IMR-90 (cell line): ENCODE measurements at regions of chr17 and their contacts with region 1.

Region 1: GRCh38 chr17:76868176-76868668 is at the start of gene MGAT5B:
- DNase-seq: peak; percentile 76
- ATAC-seq: peak; percentile 91
- H3K4me3 ChIP-seq: peak within 1 kb of the TSS; percentile 41
- H3K27ac ChIP-seq: no peak within 1 kb of the TSS; the same call in 1 of the 2 replicates
- H3K4me1 ChIP-seq: peaks cover 26% of the 10 kb centered on the region
- H3K27me3 ChIP-seq: peaks cover 16% of the 10 kb centered on the region
- CTCF ChIP-seq: peak; percentile 94
- POLR2A ChIP-seq: peak; percentile 50; the same call in 1 of the 2 replicates
- RAD21 ChIP-seq: peak; percentile 97
- total RNA-seq, gene MGAT5B: 0.54 and 0.56 TPM in 2 replicates

Region 2: GRCh38 chr17:77054936-77055335 is 186.7 kb after region 1 on chr17:
- CTCF ChIA-PET with region 1: interaction called, 32 read pairs
- POLR2A ChIA-PET with region 1: no interaction called
- dilution Hi-C with region 1: no loop called
- in situ Hi-C with region 1: loop called (anchors 5 kb)
- intact Hi-C with region 1: loop called (anchors 1 kb)
- DNase-seq: no peak
- ATAC-seq: peak; percentile 21; the same call in 1 of the 2 replicates
- H3K4me3 ChIP-seq: no peak overlapping the region
- H3K27ac ChIP-seq: no peak overlapping the region
- H3K4me1 ChIP-seq: no peaks in the 10 kb centered on the region
- H3K27me3 ChIP-seq: peaks cover 54% of the 10 kb centered on the region
- CTCF ChIP-seq: no peak
- POLR2A ChIP-seq: no peak
- RAD21 ChIP-seq: no peak

Region 3: DNA sequence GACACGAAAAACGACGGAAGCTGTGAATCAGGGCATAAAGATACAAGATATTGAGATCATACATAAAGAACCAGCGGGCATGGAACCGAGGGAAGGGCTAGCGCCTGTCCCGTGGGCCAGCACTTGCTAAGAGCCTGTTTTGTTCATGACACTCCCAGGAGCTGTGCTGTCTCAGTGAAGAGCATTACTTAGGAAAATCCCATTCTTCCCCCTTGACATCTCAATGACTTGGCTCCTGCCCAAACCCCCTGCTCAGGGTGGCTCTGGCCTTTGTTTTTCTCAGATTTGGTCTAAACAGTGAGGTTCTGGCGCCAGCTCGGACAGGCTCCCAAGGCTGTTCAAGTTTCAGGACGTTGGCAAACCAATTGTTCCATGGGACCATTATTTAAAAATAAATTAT is 193.4 kb after region 1 on chr17:
- CTCF ChIA-PET with region 1: interaction called, 32 read pairs
- POLR2A ChIA-PET with region 1: no interaction called
- dilution Hi-C with region 1: no loop called
- in situ Hi-C with region 1: loop called (anchors 5 kb)
- intact Hi-C with region 1: loop called (anchors 1 kb)
- DNase-seq: no peak
- ATAC-seq: no peak
- H3K4me3 ChIP-seq: no peak overlapping the region
- H3K27ac ChIP-seq: no peak overlapping the region
- H3K4me1 ChIP-seq: no peaks in the 10 kb centered on the region; the same call in 1 of the 2 replicates
- H3K27me3 ChIP-seq: peaks cover 28% of the 10 kb centered on the region
- CTCF ChIP-seq: no peak
- POLR2A ChIP-seq: no peak
- RAD21 ChIP-seq: no peak

Region 4: GRCh38 chr17:77247048-77247541 is 378.9 kb after region 1 on chr17:
- CTCF ChIA-PET with region 1: no interaction called
- POLR2A ChIA-PET with region 1: no interaction called
- dilution Hi-C with region 1: no loop called
- in situ Hi-C with region 1: loop called (anchors 25 kb)
- intact Hi-C with region 1: loop called (anchors 5 kb)
- DNase-seq: peak; percentile 59
- ATAC-seq: peak; percentile 99
- H3K4me3 ChIP-seq: peak overlapping the region; percentile 59
- H3K27ac ChIP-seq: peak overlapping the region; percentile 50; the same call in 1 of the 2 replicates
- H3K4me1 ChIP-seq: peaks cover 4% of the 10 kb centered on the region; the same call in 1 of the 2 replicates
- H3K27me3 ChIP-seq: no peaks in the 10 kb centered on the region; the same call in 1 of the 2 replicates
- CTCF ChIP-seq: peak; percentile 85
- POLR2A ChIP-seq: 0 out of 2 replicates have a peak, but pooled peaks have one; percentile 35
- RAD21 ChIP-seq: peak; percentile 88

Region 5: GRCh38 chr17:77590951-77591735 is 722.9 kb after region 1 on chr17:
- CTCF ChIA-PET with region 1: no interaction called
- POLR2A ChIA-PET with region 1: no interaction called
- dilution Hi-C with region 1: no loop called
- in situ Hi-C with region 1: no loop called
- intact Hi-C with region 1: no loop called
- DNase-seq: no peak
- ATAC-seq: no peak
- H3K4me3 ChIP-seq: no peak overlapping the region
- H3K27ac ChIP-seq: no peak overlapping the region
- H3K4me1 ChIP-seq: no peaks in the 10 kb centered on the region
- H3K27me3 ChIP-seq: peaks cover 40% of the 10 kb centered on the region
- CTCF ChIP-seq: no peak
- POLR2A ChIP-seq: no peak
- RAD21 ChIP-seq: no peak

Region 6: GRCh38 chr17:78140169-78140976 is 1272.2 kb after region 1 on chr17:
- CTCF ChIA-PET with region 1: no interaction called
- POLR2A ChIA-PET with region 1: interaction called, 15 read pairs
- dilution Hi-C with region 1: no loop called
- in situ Hi-C with region 1: no loop called
- intact Hi-C with region 1: no loop called
- DNase-seq: peak; percentile 21
- ATAC-seq: peak; percentile 79
- H3K4me3 ChIP-seq: no peak overlapping the region
- H3K27ac ChIP-seq: no peak overlapping the region
- H3K4me1 ChIP-seq: peaks cover 3% of the 10 kb centered on the region; the same call in 1 of the 2 replicates
- H3K27me3 ChIP-seq: peaks cover 3% of the 10 kb centered on the region; the same call in 1 of the 2 replicates
- CTCF ChIP-seq: no peak
- POLR2A ChIP-seq: no peak
- RAD21 ChIP-seq: no peak